ENCODE measurements at regions of chr3 and their contacts with region 1.

Region 1: GRCh38 chr3:113897373-113897777 is 50.4 kb upstream of the ZDHHC23 start:
- DNase-seq: peak; percentile 23 to 85
- H3K4me3 ChIP-seq: peak overlapping the region; percentile 49
- H3K27ac ChIP-seq: peak overlapping the region; percentile 48
- H3K4me1 ChIP-seq: peaks cover 33% of the 10 kb centered on the region
- H3K27me3 ChIP-seq: no peaks in the 10 kb centered on the region
- CTCF ChIP-seq: no peak

Region 2: GRCh38 chr3:113819866-113820265 is 77.5 kb before region 1 on chr3:
- CTCF ChIA-PET with region 1: interaction called, 12 read pairs
- POLR2A ChIA-PET with region 1: no interaction called
- intact Hi-C with region 1: no loop called
- DNase-seq: no peak
- H3K4me3 ChIP-seq: no peak overlapping the region
- H3K27ac ChIP-seq: no peak overlapping the region
- H3K4me1 ChIP-seq: no peaks in the 10 kb centered on the region; the same call in 1 of the 2 replicates
- H3K27me3 ChIP-seq: no peaks in the 10 kb centered on the region
- CTCF ChIP-seq: no peak

Region 3: DNA sequence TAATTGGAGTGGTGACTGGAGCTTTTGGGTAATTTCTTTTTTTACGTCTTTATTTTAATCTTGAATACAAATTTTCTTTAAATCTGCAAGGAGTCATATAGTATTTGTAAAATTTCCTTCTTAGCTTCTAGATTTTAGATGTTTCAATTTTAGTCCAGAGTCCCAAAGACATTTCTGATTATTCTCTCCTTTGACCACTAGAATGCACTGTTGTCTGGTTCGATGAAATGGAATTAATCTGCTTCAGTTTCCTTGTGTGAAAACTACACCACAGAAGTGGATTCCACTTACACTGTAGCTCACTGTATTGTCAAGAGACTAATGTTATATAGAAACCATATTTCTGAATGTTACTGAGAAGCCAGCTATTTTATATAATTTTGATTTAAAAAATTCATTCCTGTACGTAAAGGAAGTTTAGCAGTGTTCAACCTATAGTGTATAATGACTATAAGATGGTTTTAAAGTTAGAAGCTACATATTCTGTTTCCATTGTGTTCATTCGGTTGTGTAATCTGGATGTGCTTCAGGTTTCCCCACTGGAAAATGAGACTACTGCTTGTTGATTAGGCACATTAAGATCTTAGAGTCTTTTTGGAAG is 52.7 kb before region 1 on chr3:
- CTCF ChIA-PET with region 1: interaction called, 3 read pairs
- POLR2A ChIA-PET with region 1: no interaction called
- intact Hi-C with region 1: loop called (anchors 2 kb)
- DNase-seq: peak in 1 of 2 experiments; percentile 42
- H3K4me3 ChIP-seq: no peak overlapping the region
- H3K27ac ChIP-seq: no peak overlapping the region
- H3K4me1 ChIP-seq: peaks cover 23% of the 10 kb centered on the region
- H3K27me3 ChIP-seq: no peaks in the 10 kb centered on the region
- CTCF ChIP-seq: peak; percentile 68

Region 4: DNA sequence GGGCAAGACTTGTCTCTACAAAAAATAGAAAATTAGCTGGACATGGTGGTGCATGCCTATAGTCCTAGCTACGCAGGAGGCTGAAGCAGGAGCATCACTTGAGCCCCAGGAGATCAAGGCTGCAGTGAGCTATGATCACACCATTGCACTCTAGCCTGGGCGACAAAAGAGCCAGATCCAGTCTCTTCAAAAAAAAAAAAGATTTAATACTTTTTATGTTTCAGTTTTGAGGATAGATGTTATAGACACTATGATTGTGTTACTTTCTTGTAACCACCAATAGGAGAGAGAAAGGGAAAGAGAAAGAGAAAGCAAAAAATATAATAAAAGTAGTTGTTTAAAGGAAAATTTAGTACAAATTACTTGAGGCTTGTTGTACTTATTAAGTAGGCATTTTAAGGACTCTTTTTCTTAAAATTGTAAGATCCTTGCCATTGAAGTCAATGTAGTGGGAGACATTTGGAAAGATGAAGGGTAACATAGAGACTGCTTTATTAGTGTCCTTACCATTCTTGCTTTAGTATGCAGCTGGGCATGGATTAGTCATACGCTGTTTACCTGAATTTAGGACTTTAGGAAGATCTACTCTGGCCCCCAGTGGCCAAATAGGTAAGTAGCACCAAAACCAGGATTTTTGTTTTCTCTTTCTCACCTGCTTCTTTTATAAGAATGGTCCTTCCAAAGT is 15.3 kb after region 1 on chr3:
- CTCF ChIA-PET with region 1: no interaction called
- POLR2A ChIA-PET with region 1: no interaction called
- intact Hi-C with region 1: no loop called
- DNase-seq: peak; percentile 48 to 77
- H3K4me3 ChIP-seq: no peak overlapping the region
- H3K27ac ChIP-seq: no peak overlapping the region
- H3K4me1 ChIP-seq: peaks cover 4% of the 10 kb centered on the region; the same call in 1 of the 2 replicates
- H3K27me3 ChIP-seq: no peaks in the 10 kb centered on the region
- CTCF ChIP-seq: peak; percentile 84

Region 5: DNA sequence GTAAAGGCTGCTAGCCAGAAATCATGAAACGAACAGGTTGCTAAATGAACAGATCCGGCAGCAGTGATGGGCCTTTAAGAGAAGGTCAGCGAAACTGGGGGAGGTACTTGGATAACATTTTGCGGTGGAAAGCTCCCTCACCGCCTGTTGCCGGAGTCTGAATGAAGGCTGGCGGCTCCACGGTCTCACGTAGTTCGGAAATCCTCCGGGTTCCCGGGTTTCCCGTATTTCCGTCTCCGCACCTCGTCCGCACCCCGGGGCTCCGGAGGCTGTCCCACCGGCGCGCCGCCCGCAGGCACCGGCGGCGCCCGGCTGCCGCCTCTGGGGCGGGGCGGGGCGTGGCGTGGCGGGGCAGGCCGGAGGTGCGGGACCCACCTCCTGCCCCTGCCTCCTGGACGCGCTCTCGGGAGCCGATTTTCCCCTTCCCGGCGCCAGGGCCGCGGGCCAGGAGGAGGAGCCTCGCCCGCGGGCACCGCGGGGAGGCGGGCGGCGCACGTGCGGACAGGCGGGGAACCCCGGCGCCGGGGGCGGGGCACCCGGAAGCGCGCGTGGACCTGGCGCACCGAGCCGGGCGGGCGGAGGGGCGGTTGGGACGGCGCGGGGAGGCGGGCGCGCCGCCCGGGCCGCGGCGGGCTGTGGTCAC is 50.1 kb after region 1 on chr3 and contains the start of gene ZDHHC23:
- CTCF ChIA-PET with region 1: no interaction called
- POLR2A ChIA-PET with region 1: no interaction called
- intact Hi-C with region 1: loop called (anchors 5 kb)
- DNase-seq: peak; percentile 50 to 94
- H3K4me3 ChIP-seq: peak within 1 kb of the TSS; percentile 82
- H3K27ac ChIP-seq: no peak within 1 kb of the TSS
- H3K4me1 ChIP-seq: peaks cover 7% of the 10 kb centered on the region
- H3K27me3 ChIP-seq: no peaks in the 10 kb centered on the region
- CTCF ChIP-seq: no peak
- total RNA-seq, gene ZDHHC23: 17.5 and 20.9 TPM in 2 replicates

Region 6: GRCh38 chr3:113985541-113985940 is 88.2 kb after region 1 on chr3:
- CTCF ChIA-PET with region 1: no interaction called
- POLR2A ChIA-PET with region 1: no interaction called
- intact Hi-C with region 1: no loop called
- DNase-seq: no peak
- H3K4me3 ChIP-seq: no peak overlapping the region
- H3K27ac ChIP-seq: no peak overlapping the region
- H3K4me1 ChIP-seq: no peaks in the 10 kb centered on the region
- H3K27me3 ChIP-seq: no peaks in the 10 kb centered on the region
- CTCF ChIP-seq: no peak

Measured in PC-9 (cell line).